AG04450 (cell line): ENCODE measurements at regions of chr2 and their contacts with region 1.

Region 1: GRCh38 chr2:28751252-28751955 is at the start of gene PPP1CB:
- DNase-seq: peak; percentile 92
- H3K4me3 ChIP-seq: peak within 1 kb of the TSS; percentile 93
- H3K27ac ChIP-seq: peak within 1 kb of the TSS; percentile 94
- H3K27me3 ChIP-seq: no peaks in the 10 kb centered on the region
- CTCF ChIP-seq: peak; percentile 20
- polyA plus RNA-seq, gene PPP1CB: 105 and 159 TPM in 2 replicates

Region 2: DNA sequence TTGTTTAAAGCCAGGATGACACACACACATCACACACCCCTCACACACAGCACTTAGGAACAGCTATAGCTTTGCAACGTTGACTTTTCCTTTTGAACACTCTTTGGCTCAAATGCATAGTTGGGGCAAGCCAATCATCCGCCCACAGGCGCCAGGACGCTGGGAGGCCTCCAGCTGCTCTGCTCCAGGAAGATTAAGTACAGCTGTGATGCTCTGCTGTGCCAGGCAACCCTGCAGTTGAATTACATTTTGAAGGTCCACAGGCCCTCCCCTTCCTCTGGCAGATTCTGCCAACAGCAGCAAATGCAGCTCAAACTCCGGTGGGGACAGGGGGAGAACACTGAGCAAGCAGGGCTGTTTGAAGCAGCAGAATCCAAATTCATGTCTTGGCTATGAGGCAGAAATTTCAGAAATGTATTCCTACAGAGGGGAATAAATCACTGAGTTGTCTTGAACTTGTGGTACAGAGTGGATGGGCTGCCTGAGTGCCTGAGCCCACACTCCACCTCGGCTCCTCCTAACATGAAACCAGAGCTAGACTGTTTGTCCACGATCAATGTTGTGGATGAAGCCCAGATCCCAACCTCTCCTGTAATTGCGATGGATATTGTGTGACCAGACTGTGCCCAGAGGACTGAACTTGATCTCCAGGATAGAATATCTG is 86.2 kb before region 1 on chr2:
- CTCF ChIA-PET with region 1: interaction called, 5 read pairs
- POLR2A ChIA-PET with region 1: interaction called, 20 read pairs
- DNase-seq: peak; percentile 74
- H3K4me3 ChIP-seq: no peak overlapping the region
- H3K27ac ChIP-seq: peak overlapping the region; percentile 87
- H3K27me3 ChIP-seq: no peaks in the 10 kb centered on the region
- CTCF ChIP-seq: no peak

Region 3: GRCh38 chr2:28764909-28765711 is 13.7 kb after region 1 on chr2:
- CTCF ChIA-PET with region 1: no interaction called
- POLR2A ChIA-PET with region 1: no interaction called
- DNase-seq: no peak
- H3K4me3 ChIP-seq: no peak overlapping the region
- H3K27ac ChIP-seq: no peak overlapping the region
- H3K27me3 ChIP-seq: no peaks in the 10 kb centered on the region
- CTCF ChIP-seq: no peak

Region 4: GRCh38 chr2:28842042-28842441 is 90.6 kb after region 1 on chr2:
- CTCF ChIA-PET with region 1: no interaction called
- POLR2A ChIA-PET with region 1: no interaction called
- DNase-seq: no peak
- H3K4me3 ChIP-seq: no peak overlapping the region
- H3K27ac ChIP-seq: peak overlapping the region; percentile 0
- H3K27me3 ChIP-seq: no peaks in the 10 kb centered on the region
- CTCF ChIP-seq: no peak